ENCODE measurements at regions of chr3 and their contacts with region 1.

Region 1: DNA sequence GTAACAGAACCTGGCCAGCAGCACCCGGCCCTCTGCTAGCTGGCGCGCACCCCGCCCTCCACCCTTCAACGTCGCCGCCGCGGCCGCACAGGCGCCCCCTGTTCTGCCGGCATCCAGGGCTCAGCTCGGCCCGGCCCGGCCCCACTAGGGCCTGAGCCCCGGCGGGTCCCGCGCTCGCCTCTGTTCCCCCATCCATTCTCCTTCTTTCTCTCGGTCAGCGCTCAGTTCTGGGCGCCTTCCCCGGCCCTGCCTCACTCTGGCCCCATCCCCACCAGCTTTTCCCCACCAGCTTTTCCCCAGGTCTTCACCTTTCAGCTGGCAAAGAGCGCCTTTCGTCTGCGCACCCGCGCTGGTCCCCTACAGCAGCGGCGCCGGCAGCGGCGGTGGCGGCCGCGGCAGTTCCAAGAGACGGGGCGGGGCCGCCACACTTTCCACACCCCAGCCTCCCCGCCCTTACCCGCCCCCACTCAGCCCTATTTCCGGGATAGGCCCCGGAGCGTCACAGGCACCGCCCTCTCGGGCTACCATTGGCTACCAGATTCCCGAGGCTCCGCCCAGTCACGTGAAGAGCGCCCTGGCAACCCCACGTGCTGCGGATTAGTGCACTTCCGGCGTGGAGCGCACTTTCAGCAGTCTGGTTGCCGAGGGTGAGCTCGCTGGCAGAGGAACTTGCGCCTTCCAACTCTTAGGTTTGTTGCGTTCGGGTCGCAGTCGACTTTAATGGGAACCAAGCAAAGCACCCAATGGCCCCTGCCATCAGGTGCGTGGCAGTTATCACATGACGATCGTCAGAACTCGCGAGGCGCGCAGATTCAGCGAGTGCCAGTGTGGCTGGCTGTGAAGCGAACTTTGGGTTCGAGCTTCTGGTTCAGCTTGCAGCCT is at the start of gene EIF5A2:
- DNase-seq: peak; percentile 97
- H3K4me3 Mint-ChIP-seq: peak within 1 kb of the TSS; percentile 95
- H3K27ac Mint-ChIP-seq: peak within 1 kb of the TSS; percentile 80
- H3K4me1 Mint-ChIP-seq: peaks cover 22% of the 10 kb centered on the region
- H3K27me3 Mint-ChIP-seq: no peaks in the 10 kb centered on the region
- total RNA-seq, gene EIF5A2: 3.4 to 5.2 TPM

Region 2: DNA sequence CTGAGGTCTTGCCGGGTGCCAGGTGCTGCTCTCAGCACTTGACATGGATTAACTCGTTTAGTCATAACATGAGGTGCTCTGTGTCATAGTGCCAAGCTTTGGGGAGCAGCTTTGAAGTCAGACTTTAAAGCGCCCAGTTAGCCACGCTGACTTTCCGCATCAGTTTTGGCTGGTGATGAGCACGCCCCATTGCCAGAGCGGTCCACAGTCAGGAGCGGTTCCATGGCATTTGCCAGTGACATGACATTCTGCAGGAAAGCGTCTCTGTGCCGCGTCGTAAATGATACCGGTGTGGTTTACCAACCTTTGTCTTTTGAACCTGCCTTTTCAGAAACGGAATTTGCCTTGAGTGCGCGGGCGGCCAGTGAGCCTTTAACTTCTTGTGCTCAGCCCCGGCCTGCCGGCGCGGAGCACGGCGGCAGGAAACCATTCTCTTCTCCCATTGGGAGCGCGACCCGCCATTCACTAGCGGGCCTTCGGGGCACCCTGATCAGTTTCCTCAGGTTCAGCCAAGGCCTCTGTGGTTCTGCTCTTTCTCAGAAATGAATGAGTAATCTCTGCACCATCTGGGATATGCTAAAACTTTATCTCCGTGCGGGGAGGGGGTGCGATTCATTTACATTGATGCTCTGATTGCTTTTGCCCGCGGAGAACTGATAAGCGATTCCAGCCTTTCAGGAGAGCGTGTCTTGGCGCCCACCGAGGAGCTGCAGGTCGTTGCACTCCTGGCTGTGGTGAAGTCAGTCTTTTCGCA is 119.7 kb after region 1 on chr3:
- CTCF ChIA-PET with region 1: no interaction called
- intact Hi-C with region 1: loop called (anchors 1 kb)
- DNase-seq: peak; percentile 80
- H3K4me3 Mint-ChIP-seq: no peak overlapping the region
- H3K27ac Mint-ChIP-seq: no peak overlapping the region
- H3K4me1 Mint-ChIP-seq: peaks cover 4% of the 10 kb centered on the region
- H3K27me3 Mint-ChIP-seq: peaks cover 14% of the 10 kb centered on the region

Region 3: DNA sequence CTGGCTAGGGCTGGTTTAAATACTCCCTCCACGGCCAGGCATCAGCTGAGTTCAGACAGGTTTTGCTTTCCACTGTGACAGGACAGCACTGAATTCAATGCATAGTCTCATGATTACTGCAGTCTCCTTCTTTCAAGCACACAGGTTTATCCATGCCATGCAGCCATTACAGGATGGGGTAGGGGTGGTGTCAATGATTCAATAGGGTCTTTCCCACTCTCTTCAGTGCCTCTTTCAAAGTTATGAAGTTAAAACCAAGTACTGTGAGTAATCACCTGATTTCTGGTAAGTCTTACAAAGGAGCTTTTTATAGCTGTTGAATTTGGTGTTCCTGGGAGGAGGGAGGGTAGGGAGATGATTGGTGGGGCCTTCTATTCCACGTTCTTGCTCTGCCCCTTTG is 981.9 kb after region 1 on chr3:
- CTCF ChIA-PET with region 1: no interaction called
- intact Hi-C with region 1: no loop called
- DNase-seq: peak; percentile 37
- H3K4me3 Mint-ChIP-seq: no peak overlapping the region
- H3K27ac Mint-ChIP-seq: no peak overlapping the region
- H3K4me1 Mint-ChIP-seq: peaks cover 8% of the 10 kb centered on the region
- H3K27me3 Mint-ChIP-seq: peaks cover 3% of the 10 kb centered on the region